Dendritic cell treated with granulocyte-macrophage colony-stimulating factor and Interleukin-4, amounts not matched to agents 40 ng/mL and 50 ng/mL, for 4 days (primary cell): ENCODE measurements at regions of chr6 and their contacts with region 1.

Region 1: DNA sequence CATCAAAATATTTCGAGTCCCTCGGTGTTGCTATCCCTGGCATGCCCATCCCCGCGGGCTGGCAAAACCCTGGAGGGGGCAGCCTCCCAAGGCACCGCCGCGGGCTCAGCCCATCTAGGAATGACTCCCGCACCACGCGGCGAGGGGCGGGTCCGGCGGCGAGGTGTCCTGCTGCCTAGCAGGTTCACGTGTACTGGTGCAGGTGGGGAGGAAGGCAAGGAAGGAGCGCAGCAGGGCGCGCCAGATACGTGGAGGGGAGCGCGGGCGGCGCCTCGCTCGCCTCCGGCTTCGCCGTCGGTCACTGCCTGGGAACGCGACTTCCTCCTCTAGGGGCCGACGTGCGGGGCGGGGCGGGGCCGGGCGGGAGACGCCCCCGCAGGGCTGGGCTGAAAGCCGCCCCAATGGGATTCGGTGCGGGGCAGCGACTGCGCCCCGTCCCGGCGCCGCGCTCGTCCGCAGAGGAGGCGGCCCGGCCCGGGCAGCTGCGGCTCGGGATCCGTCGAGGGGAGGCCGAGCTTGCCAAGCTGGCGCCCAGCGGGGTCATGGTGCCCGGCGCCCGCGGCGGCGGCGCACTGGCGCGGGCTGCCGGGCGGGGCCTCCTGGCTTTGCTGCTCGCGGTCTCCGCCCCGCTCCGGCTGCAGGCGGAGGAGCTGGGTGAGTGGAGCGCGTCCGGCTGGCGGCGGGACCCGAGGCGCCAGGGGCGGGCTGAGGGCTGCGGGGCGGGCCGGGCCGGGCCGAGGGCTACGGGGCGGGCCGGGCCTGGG is at the start of gene DCBLD1:
- H3K4me3 Mint-ChIP-seq: peak within 1 kb of the TSS; percentile 94
- H3K27ac Mint-ChIP-seq: peak within 1 kb of the TSS; percentile 83
- H3K4me1 Mint-ChIP-seq: peaks cover 13% of the 10 kb centered on the region
- H3K27me3 Mint-ChIP-seq: peaks cover 46% of the 10 kb centered on the region

Region 2: GRCh38 chr6:117496383-117496990 is 14.1 kb after region 1 on chr6:
- intact Hi-C with region 1: loop called (anchors 2 kb)
- H3K4me3 Mint-ChIP-seq: no peak overlapping the region
- H3K27ac Mint-ChIP-seq: no peak overlapping the region
- H3K4me1 Mint-ChIP-seq: peaks cover 31% of the 10 kb centered on the region
- H3K27me3 Mint-ChIP-seq: no peaks in the 10 kb centered on the region

Region 3: GRCh38 chr6:117555882-117556498 is 73.6 kb after region 1 on chr6:
- intact Hi-C with region 1: loop called (anchors 1 kb)
- H3K4me3 Mint-ChIP-seq: no peak overlapping the region
- H3K27ac Mint-ChIP-seq: no peak overlapping the region
- H3K4me1 Mint-ChIP-seq: no peaks in the 10 kb centered on the region
- H3K27me3 Mint-ChIP-seq: peaks cover 2% of the 10 kb centered on the region

Region 4: DNA sequence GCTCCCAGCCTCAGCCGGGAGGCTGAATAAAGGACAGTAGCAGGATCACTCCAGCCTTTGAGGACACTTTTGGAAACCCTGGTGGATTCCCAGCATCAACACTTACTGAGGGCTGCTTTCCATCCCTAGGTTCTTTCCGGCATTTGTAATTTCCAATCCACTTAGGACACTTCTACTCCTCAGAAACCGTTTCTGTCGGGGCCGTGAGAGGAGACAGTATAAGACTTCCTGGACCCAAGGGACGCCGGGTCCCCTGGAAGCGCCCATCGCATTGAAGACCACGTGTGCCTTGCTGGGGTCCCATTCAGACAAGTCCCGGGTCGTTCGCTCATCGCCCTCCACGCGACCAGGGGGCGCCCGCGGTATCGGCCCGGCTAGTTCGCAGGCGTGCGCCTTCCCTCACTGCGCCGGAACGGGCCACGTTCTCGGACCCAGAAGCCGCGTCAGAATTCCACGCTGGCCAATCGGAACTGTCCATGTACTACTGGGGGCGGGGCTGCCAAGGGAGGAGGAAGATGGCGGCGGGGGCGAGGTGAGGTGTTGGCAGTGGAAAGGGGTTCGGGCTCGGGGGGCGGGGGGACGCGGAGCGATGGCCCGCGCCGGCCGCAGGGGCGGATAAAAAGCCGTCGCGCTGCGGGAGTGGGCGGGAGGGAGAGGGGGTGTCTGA is 192.7 kb after region 1 on chr6 and contains the start of gene NUS1:
- intact Hi-C with region 1: loop called (anchors 10 kb)
- H3K4me3 Mint-ChIP-seq: peak within 1 kb of the TSS; percentile 86
- H3K27ac Mint-ChIP-seq: peak within 1 kb of the TSS; percentile 68
- H3K4me1 Mint-ChIP-seq: peaks cover 40% of the 10 kb centered on the region
- H3K27me3 Mint-ChIP-seq: no peaks in the 10 kb centered on the region